ENCODE measurements at regions of chr4 and their contacts with region 1.

Region 1: DNA sequence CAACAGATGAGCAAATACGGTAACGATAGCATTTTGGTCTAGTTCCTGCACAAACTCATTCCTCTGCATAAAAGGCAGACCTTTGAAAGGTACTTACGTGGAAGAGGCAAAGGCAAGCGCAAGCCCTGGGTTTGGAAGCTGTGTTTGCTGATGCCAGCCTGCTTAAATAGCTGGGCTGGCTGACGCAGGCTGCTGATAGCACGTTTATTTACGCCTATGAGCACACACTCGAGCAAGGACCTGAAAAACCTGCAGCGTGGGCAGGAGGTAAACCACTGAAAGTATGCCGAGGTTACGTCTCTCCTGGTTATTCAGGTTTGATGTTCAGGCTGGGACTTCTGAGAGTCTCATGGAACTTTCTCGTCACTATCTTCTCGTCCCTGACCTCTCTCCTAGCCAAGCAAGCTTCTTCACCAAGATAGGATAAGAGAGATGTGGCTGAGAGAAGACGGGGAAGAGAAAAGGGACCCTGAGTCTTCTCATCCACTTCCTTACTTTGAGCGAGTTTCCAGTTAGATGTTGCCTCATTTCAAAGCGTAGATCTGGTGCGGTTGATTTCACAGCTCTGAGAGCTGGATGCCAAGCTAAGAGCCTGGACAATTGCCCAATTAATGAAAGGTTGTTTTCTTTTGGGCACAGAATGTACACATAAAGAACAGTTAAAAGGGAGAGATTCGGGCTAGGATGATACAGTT is at the start of gene HOPX:
- DNase-seq: peak in 11 of 14 experiments; percentile 2 to 57 (median 15)
- ATAC-seq: peak; percentile 96
- H3K4me3 ChIP-seq: peak within 1 kb of the TSS; percentile 36
- H3K4me3 Mint-ChIP-seq: peak within 1 kb of the TSS; percentile 46
- H3K27ac ChIP-seq: no peak within 1 kb of the TSS
- H3K27ac Mint-ChIP-seq: no peak within 1 kb of the TSS
- H3K4me1 ChIP-seq: peaks cover 9% of the 10 kb centered on the region
- H3K4me1 Mint-ChIP-seq: peaks cover 16% of the 10 kb centered on the region
- H3K27me3 ChIP-seq: no peaks in the 10 kb centered on the region
- H3K27me3 Mint-ChIP-seq: peaks cover 23% of the 10 kb centered on the region
- CTCF ChIP-seq: no peak
- total RNA-seq, gene HOPX: 4.3 to 5.9 TPM

Region 2: DNA sequence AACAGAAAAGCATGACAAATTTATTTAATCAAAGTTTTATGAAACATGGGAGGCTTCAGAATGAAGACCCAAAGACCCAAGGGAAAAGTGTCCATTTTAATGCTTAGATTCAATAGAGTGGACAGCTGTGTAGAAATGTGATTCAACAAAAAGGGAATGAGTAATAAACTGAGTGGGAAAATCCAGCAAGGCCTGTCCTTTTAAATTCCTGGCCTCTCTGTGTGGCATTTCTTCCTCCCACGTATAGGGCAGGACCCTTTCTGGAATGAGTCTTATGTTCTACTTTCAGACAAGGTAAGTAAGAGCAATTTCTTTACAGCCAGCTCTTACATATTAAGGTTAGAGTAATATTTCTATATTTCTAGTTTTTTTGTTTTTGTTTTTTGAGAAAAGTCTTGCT is 308.5 kb before region 1 on chr4:
- CTCF ChIA-PET with region 1: no interaction called
- POLR2A ChIA-PET with region 1: no interaction called
- intact Hi-C with region 1: no loop called
- DNase-seq: no peak
- ATAC-seq: no peak
- H3K4me3 ChIP-seq: no peak overlapping the region
- H3K4me3 Mint-ChIP-seq: no peak overlapping the region
- H3K27ac ChIP-seq: no peak overlapping the region
- H3K27ac Mint-ChIP-seq: no peak overlapping the region
- H3K4me1 ChIP-seq: no peaks in the 10 kb centered on the region
- H3K4me1 Mint-ChIP-seq: peaks cover 3% of the 10 kb centered on the region
- H3K27me3 ChIP-seq: no peaks in the 10 kb centered on the region
- H3K27me3 Mint-ChIP-seq: no peaks in the 10 kb centered on the region
- CTCF ChIP-seq: no peak

Region 3: GRCh38 chr4:56668298-56668697 is 13.0 kb before region 1 on chr4:
- CTCF ChIA-PET with region 1: interaction called, 3 read pairs
- POLR2A ChIA-PET with region 1: no interaction called
- intact Hi-C with region 1: loop called in 1 of 2 experiments (anchors 1 kb)
- DNase-seq: peak in 3 of 14 experiments; percentile 13 to 30 (median 23)
- ATAC-seq: no peak
- H3K4me3 ChIP-seq: no peak overlapping the region
- H3K4me3 Mint-ChIP-seq: no peak overlapping the region
- H3K27ac ChIP-seq: no peak overlapping the region
- H3K27ac Mint-ChIP-seq: no peak overlapping the region
- H3K4me1 ChIP-seq: no peaks in the 10 kb centered on the region
- H3K4me1 Mint-ChIP-seq: no peaks in the 10 kb centered on the region
- H3K27me3 ChIP-seq: peaks cover 0 to 5% of the 10 kb centered on the region in 2 experiments
- H3K27me3 Mint-ChIP-seq: peaks cover 11% of the 10 kb centered on the region
- CTCF ChIP-seq: no peak

Region 4: GRCh38 chr4:56757821-56758411 is 76.6 kb after region 1 on chr4:
- CTCF ChIA-PET with region 1: no interaction called
- POLR2A ChIA-PET with region 1: interaction called, 8 read pairs
- intact Hi-C with region 1: loop called in 1 of 2 experiments (anchors 10 kb)
- DNase-seq: peak; percentile 35 to 85 (median 58)
- ATAC-seq: peak; percentile 81
- H3K4me3 ChIP-seq: peak overlapping the region; percentile 36
- H3K4me3 Mint-ChIP-seq: peak overlapping the region; percentile 83
- H3K27ac ChIP-seq: peak overlapping the region; percentile 71 to 75
- H3K27ac Mint-ChIP-seq: peak overlapping the region; percentile 89
- H3K4me1 ChIP-seq: peaks cover 44% of the 10 kb centered on the region
- H3K4me1 Mint-ChIP-seq: peaks cover 62% of the 10 kb centered on the region
- H3K27me3 ChIP-seq: no peaks in the 10 kb centered on the region
- H3K27me3 Mint-ChIP-seq: no peaks in the 10 kb centered on the region
- CTCF ChIP-seq: no peak

Measured in CD4-positive, alpha-beta T cell (primary cell).